ENCODE measurements at regions of chr11 and their contacts with region 1.

Region 1: GRCh38 chr11:14907411-14908213 is 15.6 kb upstream of the CYP2R1 start:
- DNase-seq: peak; percentile 42
- H3K4me3 ChIP-seq: no peak overlapping the region
- H3K27ac ChIP-seq: no peak overlapping the region
- H3K4me1 ChIP-seq: peaks cover 16% of the 10 kb centered on the region
- H3K27me3 ChIP-seq: peaks cover 0 to 13% of the 10 kb centered on the region in 2 experiments
- CTCF ChIP-seq: peak; percentile 77 to 93
- POLR2A ChIP-seq: no peak

Region 2: GRCh38 chr11:14101388-14101787 is 806.2 kb before region 1 on chr11:
- CTCF ChIA-PET with region 1: no interaction called
- POLR2A ChIA-PET with region 1: no interaction called
- dilution Hi-C with region 1: no loop called
- intact Hi-C with region 1: no loop called
- DNase-seq: no peak
- H3K4me3 ChIP-seq: no peak overlapping the region
- H3K27ac ChIP-seq: no peak overlapping the region
- H3K4me1 ChIP-seq: no peaks in the 10 kb centered on the region
- H3K27me3 ChIP-seq: no peaks in the 10 kb centered on the region
- CTCF ChIP-seq: no peak
- POLR2A ChIP-seq: no peak

Region 3: GRCh38 chr11:14578541-14578956 is 329.1 kb before region 1 on chr11:
- CTCF ChIA-PET with region 1: no interaction called
- POLR2A ChIA-PET with region 1: no interaction called
- dilution Hi-C with region 1: no loop called
- intact Hi-C with region 1: no loop called
- DNase-seq: peak; percentile 87
- H3K4me3 ChIP-seq: peak overlapping the region in 1 of 3 experiments; percentile 11
- H3K27ac ChIP-seq: peak overlapping the region; percentile 53
- H3K4me1 ChIP-seq: peaks cover 12% of the 10 kb centered on the region
- H3K27me3 ChIP-seq: peaks cover 0 to 2% of the 10 kb centered on the region in 2 experiments
- CTCF ChIP-seq: no peak
- POLR2A ChIP-seq: no peak

Region 4: DNA sequence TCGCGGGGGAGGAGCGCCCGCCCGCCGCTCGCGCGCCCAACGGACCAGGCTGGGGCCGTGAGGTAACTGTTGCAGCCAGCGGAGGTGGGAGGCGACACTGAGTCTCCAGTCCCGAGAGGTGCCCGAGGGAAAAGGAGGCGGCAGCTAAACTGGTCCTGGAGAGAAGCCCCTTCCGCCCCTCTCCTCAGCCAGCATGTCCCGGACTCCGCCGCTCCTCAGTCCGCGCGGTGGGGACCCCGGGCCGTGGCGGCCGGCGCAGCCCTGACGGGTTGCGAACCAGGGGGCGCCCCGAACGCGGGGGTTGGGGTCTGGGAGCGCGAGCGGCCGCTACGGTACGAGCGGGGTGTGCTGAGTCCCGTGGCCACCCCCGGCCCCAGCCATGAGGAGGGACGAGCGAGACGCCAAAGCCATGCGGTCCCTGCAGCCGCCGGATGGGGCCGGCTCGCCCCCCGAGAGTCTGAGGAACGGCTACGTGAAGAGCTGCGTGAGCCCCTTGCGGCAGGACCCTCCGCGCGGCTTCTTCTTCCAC is 263.9 kb before region 1 on chr11 and contains the start of gene PDE3B:
- CTCF ChIA-PET with region 1: interaction called, 17 read pairs
- POLR2A ChIA-PET with region 1: no interaction called
- dilution Hi-C with region 1: no loop called
- intact Hi-C with region 1: loop called (anchors 5 kb)
- DNase-seq: peak; percentile 35
- H3K4me3 ChIP-seq: peak within 1 kb of the TSS; percentile 51 to 65 (median 64)
- H3K27ac ChIP-seq: peak within 1 kb of the TSS; percentile 15
- H3K4me1 ChIP-seq: peaks cover 18% of the 10 kb centered on the region
- H3K27me3 ChIP-seq: peaks cover 8 to 15% of the 10 kb centered on the region in 2 experiments
- CTCF ChIP-seq: no peak
- POLR2A ChIP-seq: no peak
- total RNA-seq, gene PDE3B: 1.7 and 1.9 TPM in 2 replicates

Region 5: GRCh38 chr11:14713496-14714244 is 193.9 kb before region 1 on chr11:
- CTCF ChIA-PET with region 1: no interaction called
- POLR2A ChIA-PET with region 1: no interaction called
- dilution Hi-C with region 1: no loop called
- intact Hi-C with region 1: no loop called
- DNase-seq: no peak
- H3K4me3 ChIP-seq: no peak overlapping the region
- H3K27ac ChIP-seq: no peak overlapping the region
- H3K4me1 ChIP-seq: no peaks in the 10 kb centered on the region
- H3K27me3 ChIP-seq: no peaks in the 10 kb centered on the region
- CTCF ChIP-seq: no peak
- POLR2A ChIP-seq: no peak

Region 6: DNA sequence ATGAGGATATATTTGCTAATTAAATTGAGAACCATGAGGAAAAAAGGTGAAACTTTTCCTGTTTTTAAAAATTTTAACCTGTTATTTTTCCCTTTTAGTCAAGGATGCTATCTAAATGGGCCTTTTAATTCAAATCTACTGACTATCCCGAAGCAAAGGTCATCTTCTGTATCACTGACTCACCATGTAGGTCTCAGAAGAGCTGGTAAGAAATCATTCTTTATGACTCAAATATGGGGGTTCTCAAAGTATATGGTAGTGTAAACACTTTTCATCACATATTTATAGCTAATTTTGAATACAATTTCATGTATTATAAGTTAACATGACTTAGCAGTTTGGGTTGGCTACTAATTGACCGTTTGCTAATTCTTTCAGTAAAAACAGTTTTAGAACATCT is 103.8 kb before region 1 on chr11:
- CTCF ChIA-PET with region 1: interaction called, 12 read pairs
- POLR2A ChIA-PET with region 1: no interaction called
- dilution Hi-C with region 1: no loop called
- intact Hi-C with region 1: no loop called
- DNase-seq: no peak
- H3K4me3 ChIP-seq: no peak overlapping the region
- H3K27ac ChIP-seq: no peak overlapping the region
- H3K4me1 ChIP-seq: no peaks in the 10 kb centered on the region
- H3K27me3 ChIP-seq: no peaks in the 10 kb centered on the region
- CTCF ChIP-seq: no peak
- POLR2A ChIP-seq: no peak

Region 7: GRCh38 chr11:14882196-14882595 is 25.4 kb before region 1 on chr11:
- CTCF ChIA-PET with region 1: interaction called, 12 read pairs
- POLR2A ChIA-PET with region 1: no interaction called
- dilution Hi-C with region 1: no loop called
- intact Hi-C with region 1: no loop called
- DNase-seq: no peak
- H3K4me3 ChIP-seq: no peak overlapping the region
- H3K27ac ChIP-seq: no peak overlapping the region
- H3K4me1 ChIP-seq: no peaks in the 10 kb centered on the region
- H3K27me3 ChIP-seq: no peaks in the 10 kb centered on the region
- CTCF ChIP-seq: no peak
- POLR2A ChIP-seq: no peak

Region 8: GRCh38 chr11:14974515-14975251 is 67.1 kb after region 1 on chr11:
- CTCF ChIA-PET with region 1: interaction called, 20 read pairs
- POLR2A ChIA-PET with region 1: no interaction called
- dilution Hi-C with region 1: no loop called
- intact Hi-C with region 1: no loop called
- DNase-seq: peak; percentile 52
- H3K4me3 ChIP-seq: no peak overlapping the region
- H3K27ac ChIP-seq: no peak overlapping the region
- H3K4me1 ChIP-seq: peaks cover 3% of the 10 kb centered on the region
- H3K27me3 ChIP-seq: peaks cover 49 to 55% of the 10 kb centered on the region in 2 experiments
- CTCF ChIP-seq: peak; percentile 62 to 79
- POLR2A ChIP-seq: no peak

Region 9: GRCh38 chr11:15053191-15053685 is 145.6 kb after region 1 on chr11:
- CTCF ChIA-PET with region 1: no interaction called
- POLR2A ChIA-PET with region 1: no interaction called
- dilution Hi-C with region 1: no loop called
- intact Hi-C with region 1: no loop called
- DNase-seq: no peak
- H3K4me3 ChIP-seq: no peak overlapping the region
- H3K27ac ChIP-seq: no peak overlapping the region
- H3K4me1 ChIP-seq: no peaks in the 10 kb centered on the region
- H3K27me3 ChIP-seq: no peaks in the 10 kb centered on the region
- CTCF ChIP-seq: no peak
- POLR2A ChIP-seq: no peak

Region 10: DNA sequence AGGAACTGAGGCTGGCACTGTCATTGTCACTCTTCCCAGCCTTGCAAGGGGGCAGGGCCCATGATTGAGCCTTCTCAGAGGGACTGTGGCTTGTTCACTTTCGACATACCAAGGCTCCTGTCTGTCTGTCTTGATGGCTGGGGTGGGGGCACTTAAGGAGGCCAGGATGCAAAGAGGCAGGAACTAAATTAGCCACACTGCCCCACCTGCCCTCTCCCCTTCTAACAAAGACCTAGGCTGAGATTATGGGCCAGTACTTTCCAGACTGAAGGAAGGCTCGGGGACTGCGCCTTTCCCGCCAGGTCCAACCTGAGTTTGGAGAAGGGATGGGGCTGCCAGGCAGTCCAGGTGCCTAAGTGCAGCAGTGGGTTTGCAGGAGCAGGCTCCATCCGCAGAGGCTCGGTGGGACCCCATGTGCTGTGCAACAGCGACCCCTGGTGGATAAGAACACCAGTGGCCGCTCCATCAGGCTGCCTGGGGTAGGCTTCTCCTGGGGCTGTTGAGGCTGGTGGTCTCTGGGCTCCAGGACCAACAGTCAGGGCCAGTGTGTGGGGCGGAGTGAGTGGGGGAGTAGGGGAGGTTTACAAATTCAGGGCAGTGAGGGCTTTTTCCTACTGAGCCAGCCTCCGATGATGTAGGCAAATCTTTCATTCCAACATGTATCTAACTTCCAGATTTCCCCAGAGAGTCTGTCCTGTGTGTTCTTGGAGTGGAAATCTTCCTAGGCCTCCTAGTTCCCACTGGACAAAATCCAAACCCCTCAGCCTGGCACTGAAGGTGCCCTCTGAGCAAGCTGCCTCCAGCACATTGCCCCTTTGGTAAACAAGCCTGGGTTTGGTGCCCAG is 301.0 kb after region 1 on chr11:
- CTCF ChIA-PET with region 1: interaction called, 23 read pairs
- POLR2A ChIA-PET with region 1: no interaction called
- dilution Hi-C with region 1: no loop called
- intact Hi-C with region 1: loop called (anchors 1 kb)
- DNase-seq: peak; percentile 34
- H3K4me3 ChIP-seq: no peak overlapping the region
- H3K27ac ChIP-seq: no peak overlapping the region
- H3K4me1 ChIP-seq: no peaks in the 10 kb centered on the region
- H3K27me3 ChIP-seq: no peaks in the 10 kb centered on the region
- CTCF ChIP-seq: peak; percentile 65 to 92
- POLR2A ChIP-seq: no peak

Measured in endothelial cell of umbilical vein (primary cell).